ENCODE measurements at regions of chr10 and their contacts with region 1.

Region 1: GRCh38 chr10:97612386-97612785 is 20.9 kb downstream of the MORN4 start:
- DNase-seq: no peak
- H3K4me3 ChIP-seq: no peak overlapping the region
- H3K27ac ChIP-seq: no peak overlapping the region
- H3K4me1 ChIP-seq: no peaks in the 10 kb centered on the region
- H3K27me3 ChIP-seq: no peaks in the 10 kb centered on the region
- CTCF ChIP-seq: peak in 2 of 3 experiments; percentile 47 to 52
- POLR2A ChIP-seq: no peak

Region 2: GRCh38 chr10:97572214-97572989 is 40.0 kb before region 1 on chr10 and contains the start of gene ANKRD2:
- intact Hi-C with region 1: loop called (anchors 5 kb)
- DNase-seq: no peak
- H3K4me3 ChIP-seq: no peak within 1 kb of the TSS
- H3K27ac ChIP-seq: peak within 1 kb of the TSS; percentile 57
- H3K4me1 ChIP-seq: peaks cover 41% of the 10 kb centered on the region
- H3K27me3 ChIP-seq: no peaks in the 10 kb centered on the region
- CTCF ChIP-seq: peak; percentile 36 to 84 (median 79)
- POLR2A ChIP-seq: no peak
- total RNA-seq, gene ANKRD2: not detected

Measured in vagina (tissue), 2 donors.